ENCODE measurements at regions of chr5 and their contacts with region 1.

Region 1: GRCh38 chr5:64958757-64959391 is 190.1 kb downstream of the CWC27 start:
- DNase-seq: no peak
- H3K4me3 ChIP-seq: no peak overlapping the region
- H3K27ac ChIP-seq: no peak overlapping the region
- H3K4me1 ChIP-seq: no peaks in the 10 kb centered on the region
- H3K27me3 ChIP-seq: no peaks in the 10 kb centered on the region
- CTCF ChIP-seq: peak in 3 of 4 experiments; percentile 24 to 46 (median 35)
- EP300 ChIP-seq: no peak
- POLR2A ChIP-seq: no peak

Region 2: GRCh38 chr5:64811050-64811640 is 147.7 kb before region 1 on chr5:
- intact Hi-C with region 1: loop called (anchors 10 kb)
- DNase-seq: no peak
- H3K4me3 ChIP-seq: no peak overlapping the region
- H3K27ac ChIP-seq: no peak overlapping the region
- H3K4me1 ChIP-seq: peaks cover 0 to 6% (median 0%) of the 10 kb centered on the region in 4 donors
- H3K27me3 ChIP-seq: no peaks in the 10 kb centered on the region
- CTCF ChIP-seq: peak; percentile 39 to 58 (median 50)
- EP300 ChIP-seq: no peak
- POLR2A ChIP-seq: no peak

Region 3: GRCh38 chr5:65102828-65103711 is 144.2 kb after region 1 on chr5:
- intact Hi-C with region 1: loop called (anchors 2 kb)
- DNase-seq: peak; percentile 85
- H3K4me3 ChIP-seq: peak overlapping the region; percentile 49 to 66 (median 59)
- H3K27ac ChIP-seq: peak overlapping the region; percentile 78 to 86 (median 82)
- H3K4me1 ChIP-seq: peaks cover 0 to 6% (median 5%) of the 10 kb centered on the region in 4 donors
- H3K27me3 ChIP-seq: no peaks in the 10 kb centered on the region
- CTCF ChIP-seq: peak in 2 of 4 experiments; percentile 41 to 42
- EP300 ChIP-seq: no peak
- POLR2A ChIP-seq: no peak

Region 4: DNA sequence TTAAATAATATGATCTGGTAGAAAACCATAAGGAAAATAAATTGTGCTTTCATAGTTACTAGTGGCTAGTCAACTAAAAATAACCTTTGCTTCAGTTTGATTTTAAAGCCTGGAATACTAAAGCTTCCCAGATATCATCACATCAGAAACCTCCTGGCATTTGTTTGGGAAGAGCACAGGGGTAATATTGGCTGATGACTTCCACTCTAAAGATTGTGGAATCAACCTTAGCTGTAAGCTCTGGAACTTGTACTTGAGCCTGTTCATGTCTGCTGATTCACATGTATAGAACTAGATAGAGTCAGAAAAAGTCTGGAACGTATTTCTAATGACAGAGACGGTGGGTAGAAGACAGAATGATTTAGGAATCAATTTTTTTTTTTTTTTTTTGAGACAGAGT is 154.9 kb after region 1 on chr5:
- intact Hi-C with region 1: no loop called
- DNase-seq: no peak
- H3K4me3 ChIP-seq: no peak overlapping the region
- H3K27ac ChIP-seq: no peak overlapping the region
- H3K4me1 ChIP-seq: no peaks in the 10 kb centered on the region
- H3K27me3 ChIP-seq: no peaks in the 10 kb centered on the region
- CTCF ChIP-seq: no peak
- EP300 ChIP-seq: no peak
- POLR2A ChIP-seq: no peak

Region 5: GRCh38 chr5:65209341-65209740 is 250.5 kb after region 1 on chr5:
- intact Hi-C with region 1: loop called (anchors 10 kb)
- DNase-seq: no peak
- H3K4me3 ChIP-seq: no peak overlapping the region
- H3K27ac ChIP-seq: no peak overlapping the region
- H3K4me1 ChIP-seq: no peaks in the 10 kb centered on the region
- H3K27me3 ChIP-seq: no peaks in the 10 kb centered on the region
- CTCF ChIP-seq: no peak
- EP300 ChIP-seq: no peak
- POLR2A ChIP-seq: no peak

Measured in sigmoid colon (tissue), 7 donors.